Activated T-helper 2 cell treated with anti-CD3 and anti-CD28 coated beads, Interferon-gamma antibody, Interleukin-2, Interleukin-4, amounts not matched to agents 10 μg/mL and 5 μg/mL and 100 μg/mL, durations not matched to agents 14 hours and 24 hours and 36 hours (primary cell): ENCODE measurements at regions of chr9 and their contacts with region 1.

Region 1: DNA sequence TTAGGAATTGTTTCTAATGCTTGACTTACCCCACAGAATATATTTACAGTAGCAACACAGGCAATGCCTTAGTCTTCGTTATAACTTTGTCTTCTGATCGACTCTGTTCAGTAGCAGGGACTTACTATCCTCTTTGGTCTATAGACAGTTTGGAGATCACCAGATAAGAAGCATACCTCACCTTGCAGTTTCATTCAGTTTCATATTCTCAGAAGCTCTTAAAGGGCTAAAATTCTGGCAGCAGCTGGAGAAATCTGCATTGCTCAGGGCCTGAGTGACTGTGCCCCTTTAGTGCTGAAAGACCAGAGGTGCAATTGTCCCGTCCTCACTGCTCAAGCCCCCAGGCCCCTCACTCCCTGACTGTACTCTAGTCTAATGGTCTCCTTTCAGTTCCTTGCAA is 26.0 kb downstream of the ZBTB43 start:
- DNase-seq: no peak
- H3K4me3 Mint-ChIP-seq: no peak overlapping the region
- H3K27ac Mint-ChIP-seq: no peak overlapping the region
- H3K4me1 Mint-ChIP-seq: peaks cover 39% of the 10 kb centered on the region
- H3K27me3 Mint-ChIP-seq: no peaks in the 10 kb centered on the region

Region 2: DNA sequence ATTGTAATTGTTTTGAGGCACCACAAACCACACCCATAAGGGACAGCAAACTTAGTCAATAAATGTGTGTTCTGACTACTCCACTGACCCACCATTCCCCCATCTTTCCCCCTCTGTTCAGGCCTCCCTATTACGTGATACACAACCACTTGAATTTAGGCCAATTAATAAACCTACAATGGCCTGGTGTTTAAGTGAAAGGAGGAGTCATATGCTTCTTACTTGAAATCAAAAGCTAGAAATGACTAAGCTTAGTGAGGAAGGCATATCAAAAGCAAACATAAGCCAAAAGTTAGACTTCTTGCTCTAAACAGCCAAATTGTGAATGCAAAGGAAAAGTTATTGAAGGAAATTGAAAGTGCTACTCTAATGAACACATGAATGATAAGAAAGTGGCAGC is 11.3 kb before region 1 on chr9:
- intact Hi-C with region 1: loop called (anchors 1 kb)
- DNase-seq: no peak
- H3K4me3 Mint-ChIP-seq: no peak overlapping the region
- H3K27ac Mint-ChIP-seq: peak overlapping the region; percentile 29
- H3K4me1 Mint-ChIP-seq: peaks cover 13% of the 10 kb centered on the region
- H3K27me3 Mint-ChIP-seq: no peaks in the 10 kb centered on the region